ENCODE measurements at regions of chr12 and their contacts with region 1.

Region 1: GRCh38 chr12:112108201-112109079 is at the start of gene NAA25:
- DNase-seq: peak; percentile 80
- H3K4me3 ChIP-seq: peak within 1 kb of the TSS; percentile 74 to 86 (median 83)
- H3K27ac ChIP-seq: peak within 1 kb of the TSS; percentile 90
- H3K4me1 ChIP-seq: peaks cover 34% of the 10 kb centered on the region
- H3K27me3 ChIP-seq: no peaks in the 10 kb centered on the region
- CTCF ChIP-seq: no peak
- total RNA-seq, gene NAA25: 23.7 to 37.0 TPM

Region 2: DNA sequence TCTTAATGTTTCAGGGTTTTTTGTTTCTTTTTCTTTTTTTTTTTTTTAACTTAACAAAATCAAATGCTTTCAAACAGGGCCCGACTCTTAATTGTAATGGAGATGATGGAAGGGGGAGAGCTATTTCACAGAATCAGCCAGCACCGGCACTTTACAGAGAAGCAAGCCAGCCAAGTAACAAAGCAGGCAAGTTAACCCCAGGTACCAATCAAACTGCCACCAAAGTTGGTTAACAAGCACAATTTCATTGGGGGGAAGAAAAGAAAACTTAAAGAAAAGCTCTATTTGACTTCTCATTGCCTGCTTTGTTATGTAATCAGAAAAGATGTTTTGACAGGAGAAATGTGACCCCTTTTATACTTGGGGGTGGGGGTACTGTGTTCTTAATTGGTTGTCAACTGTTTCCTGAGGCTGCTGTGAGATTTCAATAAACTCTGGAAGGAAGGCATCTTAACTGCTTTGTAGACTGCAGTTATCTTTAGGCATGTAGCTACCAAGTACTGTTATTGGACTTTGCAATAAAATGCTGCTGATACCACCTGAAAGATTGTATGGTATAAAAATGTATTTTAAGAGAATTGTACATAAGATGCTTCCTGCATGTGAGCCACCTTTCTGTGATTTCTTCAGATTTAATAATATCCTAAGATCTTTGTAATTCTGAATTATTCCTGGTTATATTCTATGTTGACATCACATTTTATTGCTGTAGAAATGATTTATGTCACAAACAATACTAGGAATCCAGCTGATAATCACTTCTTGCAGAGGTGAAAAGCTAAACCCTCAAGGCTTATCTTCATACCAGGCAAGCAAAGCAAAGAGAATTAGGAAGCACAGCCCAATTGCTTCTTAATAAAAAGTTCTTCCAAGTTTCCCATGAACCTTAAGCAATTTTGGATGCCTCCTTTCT is 239.5 kb before region 1 on chr12:
- CTCF ChIA-PET with region 1: no interaction called
- dilution Hi-C with region 1: no loop called
- in situ Hi-C with region 1: no loop called
- intact Hi-C with region 1: no loop called
- DNase-seq: no peak
- H3K4me3 ChIP-seq: no peak overlapping the region
- H3K27ac ChIP-seq: no peak overlapping the region
- H3K4me1 ChIP-seq: no peaks in the 10 kb centered on the region
- H3K27me3 ChIP-seq: no peaks in the 10 kb centered on the region
- CTCF ChIP-seq: no peak

Region 3: DNA sequence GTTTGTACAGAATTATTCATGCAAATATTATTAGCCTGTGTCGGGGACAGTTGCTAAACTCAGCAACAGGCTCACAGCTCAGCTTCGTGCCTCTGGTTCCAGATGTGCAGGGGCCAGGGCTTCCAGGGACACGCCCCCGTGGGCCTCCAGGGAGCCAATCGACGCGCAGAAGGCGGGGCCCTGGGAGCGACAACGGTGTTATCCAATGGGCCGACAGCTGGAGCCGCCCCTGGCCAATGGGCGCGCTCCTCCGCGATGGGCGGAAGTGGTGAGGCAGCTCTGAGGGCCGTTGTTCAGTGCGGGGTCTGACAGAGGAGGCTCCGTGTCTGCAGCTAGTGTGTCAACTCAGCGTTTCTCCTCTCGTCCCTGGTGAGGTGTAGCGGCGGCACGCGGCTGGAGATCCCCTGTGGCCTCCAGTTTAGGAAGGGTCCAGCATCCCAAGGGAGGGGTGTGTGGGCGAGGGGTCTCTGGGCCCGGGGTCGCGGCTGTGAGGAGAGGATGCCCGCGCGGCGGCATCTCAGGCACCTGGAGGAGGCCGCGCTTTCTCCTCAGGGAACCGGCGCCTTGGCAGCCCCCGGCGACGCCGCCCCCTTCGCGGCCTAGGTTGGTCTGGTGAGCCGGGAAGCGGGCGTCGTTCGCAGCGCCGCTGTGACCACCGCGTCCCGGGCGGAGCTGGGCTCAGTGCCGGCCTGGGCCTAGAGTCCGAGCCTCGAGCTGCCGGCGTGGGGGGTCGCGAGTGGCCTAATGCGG is 17.0 kb after region 1 on chr12 and contains the start of gene TRAFD1:
- CTCF ChIA-PET with region 1: interaction called, 3 read pairs
- dilution Hi-C with region 1: no loop called
- in situ Hi-C with region 1: no loop called
- intact Hi-C with region 1: loop called (anchors 1 kb)
- DNase-seq: peak; percentile 97
- H3K4me3 ChIP-seq: peak within 1 kb of the TSS; percentile 68 to 100 (median 88)
- H3K27ac ChIP-seq: peak within 1 kb of the TSS; percentile 59
- H3K4me1 ChIP-seq: peaks cover 18% of the 10 kb centered on the region
- H3K27me3 ChIP-seq: no peaks in the 10 kb centered on the region
- CTCF ChIP-seq: no peak
- total RNA-seq, gene TRAFD1: 20.0 to 32.3 TPM

Region 4: DNA sequence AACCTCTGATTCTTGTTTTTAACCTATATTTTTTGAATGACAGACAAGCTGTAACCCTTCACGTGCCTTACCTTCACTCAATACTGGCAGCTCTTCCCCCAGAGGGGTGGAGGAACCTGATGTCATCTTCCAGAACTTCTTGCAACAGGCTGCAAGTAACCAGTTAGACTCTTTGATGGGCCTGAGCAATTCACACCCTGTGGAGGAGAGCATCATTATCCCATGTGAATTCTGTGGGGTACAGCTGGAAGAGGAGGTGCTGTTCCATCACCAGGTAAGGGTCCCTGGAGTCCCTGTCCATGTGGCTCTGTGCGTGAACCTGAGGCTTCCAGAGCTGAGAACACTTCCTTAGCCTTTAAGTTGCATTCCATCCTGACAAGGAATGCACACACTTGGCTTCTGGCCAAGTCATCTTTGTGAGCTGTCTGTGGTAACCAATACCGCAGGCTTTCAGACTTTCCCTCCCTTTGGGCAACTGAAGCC is 39.6 kb after region 1 on chr12:
- CTCF ChIA-PET with region 1: no interaction called
- dilution Hi-C with region 1: loop called (anchors 5 kb)
- in situ Hi-C with region 1: no loop called
- intact Hi-C with region 1: loop called (anchors 2 kb)
- DNase-seq: peak; percentile 67
- H3K4me3 ChIP-seq: no peak overlapping the region
- H3K27ac ChIP-seq: no peak overlapping the region
- H3K4me1 ChIP-seq: peaks cover 7% of the 10 kb centered on the region
- H3K27me3 ChIP-seq: no peaks in the 10 kb centered on the region
- CTCF ChIP-seq: no peak

Region 5: GRCh38 chr12:112705037-112705661 is 596.7 kb after region 1 on chr12:
- CTCF ChIA-PET with region 1: no interaction called
- dilution Hi-C with region 1: no loop called
- in situ Hi-C with region 1: no loop called
- intact Hi-C with region 1: no loop called
- DNase-seq: peak; percentile 3
- H3K4me3 ChIP-seq: no peak overlapping the region
- H3K27ac ChIP-seq: no peak overlapping the region
- H3K4me1 ChIP-seq: no peaks in the 10 kb centered on the region
- H3K27me3 ChIP-seq: no peaks in the 10 kb centered on the region
- CTCF ChIP-seq: no peak